Dorsolateral prefrontal cortex (tissue), 120 donors: ENCODE measurements at regions of chr18 and their contacts with region 1.

Region 1: GRCh38 chr18:58043491-58044379 is at the start of gene NEDD4L:
- DNase-seq: peak; percentile 69 to 91 (median 87)
- H3K4me3 ChIP-seq: peak within 1 kb of the TSS; percentile 60 to 90 (median 82)
- H3K27ac ChIP-seq: peak within 1 kb of the TSS in 57 of 59 donors; percentile 39 to 94 (median 85)
- H3K27me3 ChIP-seq: peaks cover 0 to 28% (median 0%) of the 10 kb centered on the region in 45 donors
- CTCF ChIP-seq: peak; percentile 58 to 96 (median 90)
- total RNA-seq, gene NEDD4L: 54.4 to 214 (median 149) TPM

Region 2: DNA sequence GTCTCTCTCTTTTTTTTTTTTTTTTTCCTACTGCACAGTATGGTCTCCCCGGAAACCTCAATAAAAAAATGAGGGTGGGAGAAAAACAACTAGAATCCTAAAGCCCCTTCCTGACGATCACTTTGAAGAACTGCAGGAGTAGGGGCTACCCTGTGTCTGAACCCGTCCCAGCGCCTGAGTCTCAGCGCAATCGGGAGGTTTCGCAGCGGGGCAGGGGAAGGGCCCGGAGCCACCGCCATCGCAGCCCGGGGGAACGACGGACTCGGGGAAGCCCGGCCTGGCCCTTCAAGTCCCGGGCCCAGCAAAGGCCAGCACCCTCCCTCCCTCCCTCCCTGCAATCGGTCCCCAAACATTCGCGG is 422.5 kb before region 1 on chr18:
- intact Hi-C with region 1: loop called in 1 of 2 experiments (anchors 10 kb)
- DNase-seq: no peak
- H3K4me3 ChIP-seq: peak overlapping the region; percentile 57 to 97 (median 86)
- H3K27ac ChIP-seq: peak overlapping the region; percentile 34 to 94 (median 87)
- H3K27me3 ChIP-seq: no peaks in the 10 kb centered on the region
- CTCF ChIP-seq: no peak

Region 3: GRCh38 chr18:57687970-57688369 is 355.8 kb before region 1 on chr18:
- intact Hi-C with region 1: no loop called
- DNase-seq: no peak
- H3K4me3 ChIP-seq: no peak overlapping the region
- H3K27ac ChIP-seq: no peak overlapping the region
- H3K27me3 ChIP-seq: no peaks in the 10 kb centered on the region
- CTCF ChIP-seq: no peak

Region 4: GRCh38 chr18:57832730-57833442 is 210.8 kb before region 1 on chr18:
- intact Hi-C with region 1: no loop called
- DNase-seq: no peak
- H3K4me3 ChIP-seq: no peak overlapping the region
- H3K27ac ChIP-seq: no peak overlapping the region
- H3K27me3 ChIP-seq: no peaks in the 10 kb centered on the region
- CTCF ChIP-seq: no peak

Region 5: DNA sequence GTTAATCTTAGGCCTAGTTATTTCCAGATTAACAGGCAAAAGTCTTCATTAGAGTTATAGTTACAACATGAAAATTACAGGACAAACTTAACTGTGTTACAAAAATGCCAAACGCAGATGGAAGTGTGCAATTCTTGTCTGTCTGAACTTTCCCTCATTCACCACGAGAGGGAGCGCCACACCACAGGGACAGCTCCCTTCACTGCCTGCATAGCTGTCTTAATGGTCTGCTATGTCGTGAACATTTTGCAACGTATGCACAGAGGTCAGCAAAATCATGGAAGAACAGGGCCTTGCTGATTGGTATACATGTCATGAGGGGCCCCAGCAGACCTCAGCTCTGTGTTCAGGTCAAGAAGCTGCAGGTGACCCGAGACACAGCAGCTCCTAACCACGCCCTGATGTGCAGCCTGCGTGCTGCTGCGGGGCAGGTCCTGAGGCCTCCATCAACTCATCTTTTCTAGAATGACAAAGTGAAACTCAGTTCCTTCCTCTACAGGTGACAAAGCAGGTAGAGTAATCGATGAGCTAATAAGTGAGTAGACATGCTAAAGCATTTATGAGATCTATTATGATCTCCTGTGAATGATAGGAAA is 161.8 kb before region 1 on chr18:
- intact Hi-C with region 1: loop called in 1 of 2 experiments (anchors 5 kb)
- DNase-seq: peak; percentile 37 to 79 (median 72)
- H3K4me3 ChIP-seq: peak overlapping the region in 4 of 59 donors; percentile 0 to 29 (median 14)
- H3K27ac ChIP-seq: peak overlapping the region in 2 of 59 donors; percentile 8 to 48
- H3K27me3 ChIP-seq: no peaks in the 10 kb centered on the region
- CTCF ChIP-seq: peak; percentile 77 to 99 (median 92)

Region 6: GRCh38 chr18:58097121-58097906 is 53.6 kb after region 1 on chr18:
- intact Hi-C with region 1: loop called in 1 of 2 experiments (anchors 2 kb)
- DNase-seq: no peak
- H3K4me3 ChIP-seq: peak overlapping the region in 1 of 59 donors; percentile 5
- H3K27ac ChIP-seq: peak overlapping the region in 6 of 59 donors; percentile 6 to 27 (median 20)
- H3K27me3 ChIP-seq: no peaks in the 10 kb centered on the region
- CTCF ChIP-seq: no peak

Region 7: GRCh38 chr18:58128381-58129374 is 84.9 kb after region 1 on chr18:
- intact Hi-C with region 1: loop called (anchors 2 to 5 kb)
- DNase-seq: no peak
- H3K4me3 ChIP-seq: no peak overlapping the region
- H3K27ac ChIP-seq: no peak overlapping the region
- H3K27me3 ChIP-seq: peaks cover 0 to 6% (median 0%) of the 10 kb centered on the region in 45 donors
- CTCF ChIP-seq: no peak

Region 8: GRCh38 chr18:58321986-58322385 is 278.3 kb after region 1 on chr18:
- intact Hi-C with region 1: loop called (anchors 5 to 10 kb)
- DNase-seq: peak in 6 of 10 donors; percentile 40 to 68 (median 56)
- H3K4me3 ChIP-seq: peak overlapping the region in 7 of 59 donors; percentile 1 to 28 (median 14)
- H3K27ac ChIP-seq: peak overlapping the region in 4 of 59 donors; percentile 1 to 42 (median 25)
- H3K27me3 ChIP-seq: no peaks in the 10 kb centered on the region
- CTCF ChIP-seq: peak in 55 of 56 donors; percentile 23 to 75 (median 63)